AG04449 (cell line): ENCODE measurements at regions of chr11 and their contacts with region 1.

Region 1: DNA sequence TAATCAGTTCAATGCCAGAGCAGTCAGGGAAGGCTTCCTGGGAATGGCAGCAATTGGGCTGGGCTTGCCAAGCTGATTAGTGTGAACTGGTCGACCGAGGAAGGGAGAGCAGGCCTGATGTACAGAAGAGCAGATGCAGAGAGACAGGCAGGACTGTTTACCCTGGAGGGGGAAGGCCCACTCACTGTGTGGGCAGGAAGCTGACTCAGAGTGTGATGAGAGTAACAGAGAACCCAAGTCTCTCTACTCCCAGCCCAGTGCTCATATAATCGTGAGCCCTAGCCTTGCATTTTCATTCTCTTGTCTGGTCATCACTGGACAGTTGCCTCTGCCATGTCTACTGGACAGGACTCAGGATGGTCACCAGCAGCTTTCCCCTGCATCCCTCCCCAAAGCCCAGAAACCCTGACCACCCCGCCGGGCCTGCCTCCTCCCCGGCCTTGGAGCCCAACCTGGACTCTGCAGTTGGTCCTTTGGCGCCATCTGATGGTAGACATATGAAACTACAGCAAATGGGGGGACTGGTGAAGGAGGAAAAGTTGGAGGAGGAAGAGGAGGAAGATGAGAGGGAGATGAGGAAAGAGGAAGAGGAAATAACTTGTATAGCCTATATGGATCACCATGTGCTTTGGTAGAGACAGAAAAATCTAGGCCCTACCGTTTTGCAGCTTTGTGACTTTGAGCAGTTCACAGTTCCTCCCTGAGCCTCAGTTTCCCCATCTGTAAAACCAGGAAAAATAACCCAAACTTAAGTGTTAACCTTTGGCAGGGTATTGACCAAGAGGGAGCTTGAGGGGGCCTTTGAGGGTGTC is 43.4 kb upstream of the PRDM11 start:
- DNase-seq: no peak
- H3K4me3 ChIP-seq: peak overlapping the region; percentile 29; the same call in 1 of the 2 replicates
- CTCF ChIP-seq: peak; percentile 90

Region 2: DNA sequence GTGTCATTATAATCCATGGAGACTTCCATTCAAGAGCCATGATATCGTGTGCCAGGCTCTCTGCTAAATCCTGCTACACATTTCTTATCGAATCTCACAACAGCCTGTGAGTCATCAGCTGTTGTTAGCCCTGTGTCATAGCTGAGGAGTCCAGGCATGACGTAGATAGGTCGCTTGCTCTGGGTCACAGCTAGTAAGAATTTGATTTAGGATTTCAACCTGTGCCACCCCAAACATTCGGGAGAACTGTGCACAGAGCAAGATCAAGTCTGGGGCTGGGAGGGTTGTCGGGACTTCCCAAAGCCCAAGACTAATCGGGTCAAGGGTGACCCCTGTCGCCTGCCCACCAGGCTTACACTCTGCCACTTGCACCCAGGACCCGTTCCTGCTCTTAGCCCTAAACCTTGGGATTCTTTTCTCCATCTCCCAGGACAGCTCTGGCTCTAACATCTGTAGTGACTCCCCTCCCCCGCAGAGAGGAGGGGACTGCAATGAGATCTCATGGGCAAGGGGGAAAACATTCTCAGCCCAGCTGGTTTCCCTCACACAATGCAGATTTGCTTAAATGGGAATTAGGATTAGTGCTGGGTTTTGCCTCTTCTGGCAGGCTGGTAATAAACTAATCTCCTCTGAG is 342.0 kb before region 1 on chr11:
- CTCF ChIA-PET with region 1: no interaction called
- POLR2A ChIA-PET with region 1: no interaction called
- DNase-seq: no peak
- H3K4me3 ChIP-seq: no peak overlapping the region
- CTCF ChIP-seq: no peak

Region 3: GRCh38 chr11:44814881-44815592 is 288.0 kb before region 1 on chr11:
- CTCF ChIA-PET with region 1: no interaction called
- POLR2A ChIA-PET with region 1: no interaction called
- DNase-seq: no peak
- H3K4me3 ChIP-seq: no peak overlapping the region
- CTCF ChIP-seq: no peak

Region 4: DNA sequence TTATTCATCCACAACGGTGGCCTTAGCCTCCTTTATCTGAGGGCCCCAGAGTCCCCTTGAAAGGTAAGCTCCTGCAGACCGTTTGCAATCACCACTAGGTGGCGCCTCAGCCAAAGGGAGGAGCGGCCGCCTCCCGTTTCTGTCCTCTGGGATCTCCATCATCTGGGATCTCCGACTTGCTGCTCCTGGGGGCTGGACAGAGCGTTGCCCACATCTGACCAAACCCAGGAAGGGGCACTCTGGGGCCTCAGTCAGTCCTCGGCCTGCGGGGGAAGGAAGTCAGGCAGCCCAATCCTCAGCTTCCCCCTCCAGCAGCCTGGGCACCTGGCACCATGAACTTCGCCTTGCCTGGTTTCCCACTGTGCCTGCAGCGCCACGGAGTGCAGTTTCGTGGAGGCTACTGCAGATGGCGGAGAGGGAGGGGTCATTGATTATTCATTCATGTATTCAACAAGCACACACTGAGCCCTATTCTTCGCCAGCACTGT is 175.8 kb before region 1 on chr11:
- CTCF ChIA-PET with region 1: interaction called, 2,237 read pairs
- POLR2A ChIA-PET with region 1: interaction called, 4 read pairs
- DNase-seq: no peak
- H3K4me3 ChIP-seq: no peak overlapping the region
- CTCF ChIP-seq: peak; percentile 89

Region 5: DNA sequence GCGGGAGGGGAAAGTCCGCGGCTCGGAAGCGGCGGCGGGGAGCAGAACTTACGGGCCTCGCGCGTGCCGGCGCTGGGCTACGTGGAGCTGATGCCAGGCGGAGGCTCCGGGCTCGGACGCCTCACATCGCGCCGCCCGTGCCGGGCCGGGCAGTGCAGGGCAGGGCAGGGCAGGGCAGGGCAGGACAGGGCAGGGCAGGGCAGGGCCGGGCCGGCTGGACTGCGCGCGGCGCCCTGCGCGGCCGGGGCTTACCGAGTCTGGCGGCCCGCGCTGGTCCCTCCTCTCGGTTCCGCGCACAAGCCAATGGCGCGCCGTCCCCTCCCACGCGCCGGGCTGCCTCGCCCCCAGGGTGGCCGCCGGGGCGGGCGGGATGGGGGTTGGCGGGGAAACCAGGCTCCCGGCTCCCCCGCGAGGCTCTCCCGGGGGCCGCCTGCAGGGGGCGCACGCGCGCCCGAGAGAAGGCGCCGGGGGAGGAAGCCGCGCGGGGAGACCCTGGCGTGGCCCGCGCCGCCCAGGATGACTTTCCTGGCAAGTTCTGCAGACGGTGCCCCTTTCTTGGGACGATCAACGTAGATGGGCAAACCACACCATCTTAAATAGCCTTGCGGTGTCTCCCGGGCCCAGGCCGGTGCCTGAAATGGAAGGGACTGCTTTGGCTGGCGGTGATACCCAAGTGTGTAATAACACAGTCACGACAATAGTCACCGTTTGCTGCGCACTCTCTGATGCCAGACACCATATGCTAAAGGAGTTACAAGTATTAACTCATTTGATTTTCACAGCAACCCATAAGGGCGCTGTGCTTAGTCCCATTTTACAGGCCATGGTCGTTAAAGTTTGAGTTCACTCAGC is 152.2 kb before region 1 on chr11 and contains the start of gene TP53I11:
- CTCF ChIA-PET with region 1: interaction called, 2,237 read pairs
- POLR2A ChIA-PET with region 1: no interaction called
- DNase-seq: no peak
- H3K4me3 ChIP-seq: peak within 1 kb of the TSS; percentile 66
- CTCF ChIP-seq: peak; percentile 43

Region 6: DNA sequence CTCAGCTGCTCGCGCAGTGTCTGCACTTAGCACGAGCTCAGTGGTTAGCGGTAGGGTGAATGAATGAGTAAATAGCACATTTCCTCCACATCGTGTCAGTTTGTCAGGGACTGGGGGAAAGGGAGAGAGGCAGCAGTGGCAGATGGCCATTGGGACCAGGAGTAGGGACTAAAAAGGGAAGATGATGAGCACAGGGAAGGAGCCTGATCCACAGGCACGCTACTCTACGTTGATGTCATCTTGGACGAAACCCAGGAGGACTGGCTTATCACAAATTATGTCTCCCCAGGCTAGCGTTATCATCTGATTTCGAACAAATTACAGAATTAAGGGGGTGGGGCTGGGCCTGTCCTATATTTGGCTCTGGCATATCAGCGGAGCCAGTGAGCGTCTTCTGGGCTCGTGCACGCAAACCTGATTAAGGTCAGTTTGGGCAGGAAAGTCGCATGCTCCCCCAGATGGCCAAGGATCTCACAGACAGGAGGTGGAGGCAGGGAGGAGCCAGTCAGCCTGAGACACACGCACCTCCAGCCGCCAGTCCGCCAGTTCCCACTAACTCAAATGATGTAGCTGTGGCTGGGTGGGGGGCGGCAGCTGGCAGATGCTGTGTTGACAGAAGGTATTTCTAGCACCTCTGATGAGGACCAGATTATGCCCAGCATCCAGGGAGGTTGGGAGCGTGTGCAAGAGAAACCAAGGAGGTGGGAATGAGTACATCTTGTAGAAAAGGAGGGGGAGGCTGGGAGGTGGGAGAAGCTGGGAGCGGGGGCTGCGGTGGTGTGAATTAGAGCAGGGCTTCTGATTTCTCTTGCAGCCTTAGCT is 53.9 kb before region 1 on chr11:
- CTCF ChIA-PET with region 1: no interaction called
- POLR2A ChIA-PET with region 1: no interaction called
- DNase-seq: no peak
- H3K4me3 ChIP-seq: no peak overlapping the region
- CTCF ChIP-seq: no peak

Region 7: DNA sequence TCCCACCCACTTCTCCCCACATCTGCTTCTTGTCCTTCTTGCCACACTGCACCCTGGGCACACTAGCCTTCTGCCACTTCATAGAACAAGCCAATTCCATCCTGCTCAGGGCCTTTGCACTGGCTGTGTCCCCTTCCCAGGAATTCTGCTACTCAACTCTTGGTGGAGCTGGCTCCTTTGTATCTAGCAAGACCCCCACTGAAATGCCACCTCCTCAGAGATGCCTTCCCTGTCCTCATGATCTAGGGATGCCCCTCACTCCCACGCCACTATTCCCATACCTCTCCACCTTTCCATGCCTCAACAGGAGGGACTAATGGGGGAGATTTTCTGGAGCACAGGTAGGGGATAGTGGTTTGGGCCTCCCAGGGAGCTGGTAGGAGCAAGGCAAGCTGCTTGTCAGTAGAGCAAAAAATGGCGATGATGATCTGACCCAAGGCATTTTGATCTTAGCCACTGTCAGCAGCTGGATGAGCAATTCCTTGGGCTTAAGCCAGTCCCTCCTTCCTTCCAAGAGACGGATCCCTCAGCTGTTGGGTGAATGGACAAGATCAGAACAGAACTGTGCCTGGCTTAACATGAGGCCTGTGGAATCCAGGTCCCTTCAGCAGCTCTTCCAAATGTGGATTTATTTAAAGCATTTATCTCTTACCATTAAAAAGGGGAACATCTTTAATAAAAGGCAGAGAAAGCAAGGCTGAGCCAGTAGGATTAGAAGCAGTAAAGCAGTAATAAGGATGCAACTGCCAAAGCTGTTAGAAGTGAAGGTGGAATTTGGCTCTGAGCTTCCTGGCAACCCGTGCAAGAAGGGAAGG is 39.4 kb after region 1 on chr11:
- CTCF ChIA-PET with region 1: interaction called, 10 read pairs
- POLR2A ChIA-PET with region 1: no interaction called
- DNase-seq: no peak
- H3K4me3 ChIP-seq: no peak overlapping the region
- CTCF ChIP-seq: no peak

Region 8: DNA sequence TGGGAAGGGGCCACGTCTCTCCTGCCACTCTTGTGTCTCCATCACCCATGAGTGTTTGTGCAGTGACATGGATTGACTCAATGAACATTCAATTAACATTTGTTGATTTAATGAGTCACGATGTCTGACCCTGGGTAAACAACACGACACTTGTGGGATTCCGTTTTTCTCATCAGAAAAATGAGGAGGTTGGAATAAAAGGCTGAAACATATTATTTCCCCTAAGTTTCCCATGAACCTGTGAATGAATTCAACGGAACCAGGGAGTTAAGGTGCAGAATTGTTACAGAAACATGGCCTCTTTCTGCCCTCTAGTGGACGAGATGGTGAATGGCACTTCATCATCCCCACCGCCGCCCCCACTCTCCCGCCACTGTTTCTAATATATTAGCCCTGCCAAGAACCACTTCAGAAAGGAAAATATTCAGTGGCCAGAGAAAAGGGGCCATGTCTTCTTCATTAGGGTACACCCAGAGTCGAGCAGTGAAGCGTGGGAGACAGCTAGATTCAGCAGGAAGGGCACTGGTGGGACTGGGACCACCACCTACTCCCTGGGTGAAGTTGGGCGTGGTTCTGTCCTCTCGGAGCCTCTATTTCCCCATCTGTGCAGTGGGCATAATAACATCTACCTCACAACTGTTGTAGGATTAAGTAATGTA is 229.4 kb after region 1 on chr11:
- CTCF ChIA-PET with region 1: interaction called, 344 read pairs
- POLR2A ChIA-PET with region 1: no interaction called
- DNase-seq: no peak
- H3K4me3 ChIP-seq: no peak overlapping the region
- CTCF ChIP-seq: peak; percentile 59